Activated CD8-positive, alpha-beta T cell treated with anti-CD3 and anti-CD28 coated beads for 36 hours (primary cell): ENCODE measurements at regions of chr7 and their contacts with region 1.

Region 1: GRCh38 chr7:134632937-134633540 is 13.6 kb upstream of the BPGM start:
- DNase-seq: peak; percentile 54
- ATAC-seq: peak; percentile 78
- H3K4me3 Mint-ChIP-seq: no peak overlapping the region
- H3K27ac Mint-ChIP-seq: no peak overlapping the region
- H3K4me1 Mint-ChIP-seq: peaks cover 29% of the 10 kb centered on the region
- H3K27me3 Mint-ChIP-seq: peaks cover 14% of the 10 kb centered on the region
- CTCF ChIP-seq: peak; percentile 73

Region 2: DNA sequence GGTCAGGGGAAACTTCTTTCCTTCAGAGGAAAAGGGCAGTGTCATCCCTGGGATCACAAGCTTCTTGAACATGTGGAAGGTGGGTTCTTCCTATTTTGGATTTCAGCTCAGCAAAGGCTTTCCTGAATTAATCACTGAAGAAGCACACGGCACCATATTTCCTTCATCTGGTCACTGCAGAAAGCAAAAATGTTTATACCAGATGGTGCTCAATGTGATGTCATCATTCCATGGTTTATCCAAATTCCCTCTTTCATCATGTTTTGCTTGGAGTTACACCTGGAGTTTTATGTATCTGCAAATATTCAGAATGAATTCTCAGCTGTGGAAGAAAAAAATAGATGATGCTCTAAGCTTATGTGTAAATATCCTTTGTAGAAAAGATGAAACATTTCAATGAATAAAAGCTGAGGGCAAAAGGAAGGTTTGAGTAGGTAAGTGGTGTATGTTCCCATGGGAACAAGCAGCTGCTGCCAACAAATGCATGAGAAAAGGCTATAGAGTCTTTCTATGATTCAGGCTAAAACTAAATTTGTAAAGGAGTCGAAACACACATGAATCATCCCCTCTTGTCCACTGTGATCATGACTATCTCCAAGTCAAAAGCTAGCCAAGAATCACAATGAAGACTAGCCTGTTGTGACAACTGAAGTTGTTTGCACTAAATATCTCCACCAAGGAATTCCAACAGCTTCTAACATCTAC is 13.3 kb before region 1 on chr7:
- CTCF ChIA-PET with region 1: interaction called, 22 read pairs
- POLR2A ChIA-PET with region 1: interaction called, 4 read pairs
- intact Hi-C with region 1: no loop called
- DNase-seq: no peak
- ATAC-seq: no peak
- H3K4me3 Mint-ChIP-seq: no peak overlapping the region
- H3K27ac Mint-ChIP-seq: no peak overlapping the region
- H3K4me1 Mint-ChIP-seq: peaks cover 2% of the 10 kb centered on the region
- H3K27me3 Mint-ChIP-seq: peaks cover 49% of the 10 kb centered on the region
- CTCF ChIP-seq: no peak

Region 3: GRCh38 chr7:134676743-134677142 is 43.7 kb after region 1 on chr7:
- CTCF ChIA-PET with region 1: interaction called, 18 read pairs
- POLR2A ChIA-PET with region 1: interaction called, 3 read pairs
- intact Hi-C with region 1: no loop called
- DNase-seq: no peak
- ATAC-seq: no peak
- H3K4me3 Mint-ChIP-seq: no peak overlapping the region
- H3K27ac Mint-ChIP-seq: peak overlapping the region; percentile 1
- H3K4me1 Mint-ChIP-seq: peaks cover 9% of the 10 kb centered on the region
- H3K27me3 Mint-ChIP-seq: no peaks in the 10 kb centered on the region
- CTCF ChIP-seq: no peak

Region 4: DNA sequence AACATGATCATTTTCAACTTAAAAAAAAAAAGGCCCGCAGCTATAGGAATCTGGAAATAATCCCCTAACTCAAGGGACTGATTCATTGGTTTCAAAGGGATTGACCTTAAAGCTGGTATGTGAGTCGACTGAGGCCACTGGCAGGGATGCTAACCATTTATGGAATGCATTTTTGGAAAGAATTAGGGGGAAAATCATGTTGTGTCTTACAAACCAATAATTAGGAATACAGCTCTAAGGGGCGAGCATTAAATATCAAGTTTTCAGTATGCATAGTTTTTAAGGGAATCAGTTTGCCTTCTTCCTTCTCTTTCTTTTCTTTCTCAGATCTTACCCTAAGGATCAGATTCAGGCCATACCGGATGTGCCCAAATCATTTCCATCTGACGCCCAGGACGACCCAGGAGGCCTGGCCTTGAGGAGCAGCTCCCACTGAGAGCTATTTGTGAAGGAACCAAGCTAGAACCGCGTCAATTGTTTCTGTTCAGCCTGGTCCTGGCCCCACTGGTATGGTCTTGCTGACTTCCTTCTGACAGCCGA is 62.4 kb after region 1 on chr7:
- CTCF ChIA-PET with region 1: interaction called, 109 read pairs
- POLR2A ChIA-PET with region 1: interaction called, 5 read pairs
- intact Hi-C with region 1: loop called (anchors 2 kb)
- DNase-seq: no peak
- ATAC-seq: no peak
- H3K4me3 Mint-ChIP-seq: no peak overlapping the region
- H3K27ac Mint-ChIP-seq: no peak overlapping the region
- H3K4me1 Mint-ChIP-seq: peaks cover 10% of the 10 kb centered on the region
- H3K27me3 Mint-ChIP-seq: peaks cover 5% of the 10 kb centered on the region
- CTCF ChIP-seq: no peak

Region 5: GRCh38 chr7:134750083-134751062 is 117.3 kb after region 1 on chr7:
- CTCF ChIA-PET with region 1: interaction called, 53 read pairs
- POLR2A ChIA-PET with region 1: no interaction called
- intact Hi-C with region 1: loop called (anchors 5 kb)
- DNase-seq: peak; percentile 81
- ATAC-seq: peak; percentile 84
- H3K4me3 Mint-ChIP-seq: no peak overlapping the region
- H3K27ac Mint-ChIP-seq: no peak overlapping the region
- H3K4me1 Mint-ChIP-seq: no peaks in the 10 kb centered on the region
- H3K27me3 Mint-ChIP-seq: peaks cover 2% of the 10 kb centered on the region
- CTCF ChIP-seq: peak; percentile 73

Region 6: DNA sequence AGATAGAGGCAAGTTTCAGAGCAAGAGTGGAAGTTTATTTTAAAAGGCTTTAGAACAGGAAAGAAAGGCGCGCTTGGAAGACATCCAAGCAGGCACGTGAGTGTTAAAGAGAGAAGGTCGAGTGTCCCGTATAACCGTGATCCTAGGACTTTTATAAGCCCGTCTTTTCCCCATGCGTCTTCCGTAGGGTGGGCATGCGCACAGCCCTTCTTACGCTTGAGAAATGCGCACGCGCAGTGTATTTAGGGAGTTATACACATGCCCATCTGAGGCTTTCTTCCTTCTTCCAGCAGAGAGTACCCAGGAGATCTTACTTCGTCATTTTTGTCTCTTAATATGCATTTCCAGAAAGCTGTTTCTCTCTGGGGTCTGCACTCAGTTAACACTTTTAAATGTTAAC is 198.8 kb after region 1 on chr7:
- CTCF ChIA-PET with region 1: no interaction called
- POLR2A ChIA-PET with region 1: no interaction called
- intact Hi-C with region 1: no loop called
- DNase-seq: no peak
- ATAC-seq: no peak
- H3K4me3 Mint-ChIP-seq: no peak overlapping the region
- H3K27ac Mint-ChIP-seq: no peak overlapping the region
- H3K4me1 Mint-ChIP-seq: no peaks in the 10 kb centered on the region
- H3K27me3 Mint-ChIP-seq: no peaks in the 10 kb centered on the region
- CTCF ChIP-seq: no peak

Region 7: GRCh38 chr7:134943764-134944400 is 310.8 kb after region 1 on chr7:
- CTCF ChIA-PET with region 1: interaction called, 10 read pairs
- POLR2A ChIA-PET with region 1: no interaction called
- intact Hi-C with region 1: no loop called
- DNase-seq: no peak
- ATAC-seq: no peak
- H3K4me3 Mint-ChIP-seq: no peak overlapping the region
- H3K27ac Mint-ChIP-seq: no peak overlapping the region
- H3K4me1 Mint-ChIP-seq: peaks cover 12% of the 10 kb centered on the region
- H3K27me3 Mint-ChIP-seq: peaks cover 2% of the 10 kb centered on the region
- CTCF ChIP-seq: no peak

Region 8: GRCh38 chr7:135170274-135170997 is 537.4 kb after region 1 on chr7 and contains the start of gene CYREN:
- CTCF ChIA-PET with region 1: interaction called, 15 read pairs
- POLR2A ChIA-PET with region 1: no interaction called
- intact Hi-C with region 1: no loop called
- DNase-seq: peak; percentile 96
- ATAC-seq: peak; percentile 90
- H3K4me3 Mint-ChIP-seq: peak within 1 kb of the TSS; percentile 83
- H3K27ac Mint-ChIP-seq: peak within 1 kb of the TSS; percentile 93
- H3K4me1 Mint-ChIP-seq: peaks cover 45% of the 10 kb centered on the region
- H3K27me3 Mint-ChIP-seq: no peaks in the 10 kb centered on the region
- CTCF ChIP-seq: peak; percentile 48
- total RNA-seq, gene CYREN: 32.5 to 35.4 TPM